Heart left ventricle (tissue), 16 donors: ENCODE measurements at regions of chr1 and their contacts with region 1.

Region 1: GRCh38 chr1:156689035-156689952 is 12.1 kb upstream of the NES start:
- DNase-seq: peak; percentile 63 to 82 (median 71)
- ATAC-seq: peak; percentile 75 to 96 (median 88)
- H3K4me3 ChIP-seq: peak overlapping the region in 5 of 12 donors; percentile 3 to 28 (median 8)
- H3K27ac ChIP-seq: no peak overlapping the region
- H3K4me1 ChIP-seq: peaks cover 0 to 19% (median 9%) of the 10 kb centered on the region in 12 donors
- H3K27me3 ChIP-seq: peaks cover 0 to 45% (median 32%) of the 10 kb centered on the region in 9 donors
- CTCF ChIP-seq: peak; percentile 86 to 96 (median 94)
- POLR2A ChIP-seq: no peak

Region 2: DNA sequence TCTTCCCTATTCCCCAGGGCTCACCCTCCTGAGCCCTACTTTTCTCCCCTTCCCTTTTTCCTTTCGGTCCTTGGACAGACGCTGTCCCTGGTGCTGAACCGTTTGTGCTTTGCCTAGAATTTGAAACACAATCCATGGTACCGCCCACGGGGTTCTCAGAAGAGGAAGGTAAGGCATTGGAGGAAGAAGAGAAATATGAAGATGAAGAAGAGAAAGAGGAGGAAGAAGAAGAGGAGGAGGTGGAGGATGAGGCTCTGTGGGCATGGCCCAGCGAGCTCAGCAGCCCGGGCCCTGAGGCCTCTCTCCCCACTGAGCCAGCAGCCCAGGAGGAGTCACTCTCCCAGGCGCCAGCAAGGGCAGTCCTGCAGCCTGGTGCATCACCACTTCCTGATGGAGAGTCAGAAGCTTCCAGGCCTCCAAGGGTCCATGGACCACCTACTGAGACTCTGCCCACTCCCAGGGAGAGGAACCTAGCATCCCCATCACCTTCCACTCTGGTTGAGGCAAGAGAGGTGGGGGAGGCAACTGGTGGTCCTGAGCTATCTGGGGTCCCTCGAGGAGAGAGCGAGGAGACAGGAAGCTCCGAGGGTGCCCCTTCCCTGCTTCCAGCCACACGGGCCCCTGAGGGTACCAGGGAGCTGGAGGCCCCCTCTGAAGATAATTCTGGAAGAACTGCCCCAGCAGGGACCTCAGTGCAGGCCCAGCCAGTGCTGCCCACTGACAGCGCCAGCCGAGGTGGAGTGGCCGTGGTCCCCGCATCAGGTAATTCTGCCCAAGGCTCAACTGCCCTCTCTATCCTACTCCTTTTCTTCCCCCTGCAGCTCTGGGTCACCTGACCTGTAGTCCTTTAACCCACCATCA is 36.9 kb before region 1 on chr1:
- intact Hi-C with region 1: loop called in 2 of 10 experiments (anchors 5 kb)
- DNase-seq: peak in 1 of 5 donors; percentile 37
- ATAC-seq: no peak
- H3K4me3 ChIP-seq: no peak overlapping the region
- H3K27ac ChIP-seq: no peak overlapping the region
- H3K4me1 ChIP-seq: peaks cover 0 to 11% (median 9%) of the 10 kb centered on the region in 12 donors
- H3K27me3 ChIP-seq: peaks cover 0 to 58% (median 5%) of the 10 kb centered on the region in 9 donors
- CTCF ChIP-seq: no peak
- POLR2A ChIP-seq: no peak

Region 3: GRCh38 chr1:156860113-156860627 is 170.9 kb after region 1 on chr1:
- intact Hi-C with region 1: loop called in 2 of 10 experiments (anchors 2 to 10 kb)
- DNase-seq: peak in 3 of 5 donors; percentile 30 to 59 (median 41)
- ATAC-seq: peak; percentile 28 to 80 (median 60)
- H3K4me3 ChIP-seq: peak overlapping the region; percentile 16 to 56 (median 40)
- H3K27ac ChIP-seq: no peak overlapping the region
- H3K4me1 ChIP-seq: peaks cover 12 to 37% (median 29%) of the 10 kb centered on the region in 12 donors
- H3K27me3 ChIP-seq: peaks cover 6 to 63% (median 34%) of the 10 kb centered on the region in 9 donors
- CTCF ChIP-seq: peak; percentile 70 to 93 (median 82)
- POLR2A ChIP-seq: no peak

Region 4: DNA sequence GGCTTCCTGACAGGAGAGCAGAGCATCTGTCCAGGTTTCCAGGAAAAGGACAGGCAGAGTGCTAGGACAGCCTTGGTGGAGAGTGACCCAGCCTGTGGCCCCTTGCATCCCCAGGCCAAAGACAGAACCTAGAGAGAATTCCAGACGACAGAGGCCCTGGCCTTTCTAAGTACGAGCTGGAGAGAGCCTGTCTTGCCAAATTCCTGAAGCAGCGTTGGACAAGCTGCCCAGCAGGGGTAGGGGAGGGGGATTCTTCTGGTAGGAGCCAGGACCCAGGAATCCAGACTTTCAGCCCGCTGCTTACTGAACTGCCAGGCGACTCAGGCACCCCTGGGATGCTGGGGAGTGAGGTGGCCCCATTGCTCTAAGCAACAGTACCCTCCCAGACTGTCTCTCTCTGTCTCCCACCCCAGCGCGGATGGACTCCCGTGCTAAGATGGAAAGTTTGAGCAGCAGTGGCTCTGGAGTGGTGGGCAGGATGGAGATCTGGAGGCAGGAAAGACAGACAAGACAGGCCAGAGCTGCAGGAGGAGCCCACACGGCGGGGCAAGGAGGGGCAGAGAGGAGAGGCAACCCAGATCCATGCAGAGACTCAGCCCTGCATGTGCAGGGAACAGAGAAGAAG is 195.4 kb after region 1 on chr1:
- intact Hi-C with region 1: loop called in 5 of 10 experiments (anchors 5 to 10 kb)
- DNase-seq: no peak
- ATAC-seq: peak in 2 of 4 donors; percentile 15 to 20
- H3K4me3 ChIP-seq: no peak overlapping the region
- H3K27ac ChIP-seq: no peak overlapping the region
- H3K4me1 ChIP-seq: peaks cover 0 to 18% (median 0%) of the 10 kb centered on the region in 12 donors
- H3K27me3 ChIP-seq: peaks cover 0 to 4% (median 0%) of the 10 kb centered on the region in 9 donors
- CTCF ChIP-seq: no peak
- POLR2A ChIP-seq: no peak

Region 5: GRCh38 chr1:156892190-156893047 is 203.1 kb after region 1 on chr1:
- intact Hi-C with region 1: loop called in 8 of 10 experiments (anchors 1 to 10 kb)
- DNase-seq: peak; percentile 94 to 96 (median 94)
- ATAC-seq: peak; percentile 80 to 90 (median 86)
- H3K4me3 ChIP-seq: peak overlapping the region in 10 of 12 donors; percentile 18 to 91 (median 72)
- H3K27ac ChIP-seq: peak overlapping the region; percentile 80 to 99 (median 93)
- H3K4me1 ChIP-seq: peaks cover 0 to 55% (median 38%) of the 10 kb centered on the region in 12 donors
- H3K27me3 ChIP-seq: peaks cover 0 to 28% (median 4%) of the 10 kb centered on the region in 9 donors
- CTCF ChIP-seq: peak; percentile 81 to 97 (median 88)
- POLR2A ChIP-seq: no peak

Region 6: DNA sequence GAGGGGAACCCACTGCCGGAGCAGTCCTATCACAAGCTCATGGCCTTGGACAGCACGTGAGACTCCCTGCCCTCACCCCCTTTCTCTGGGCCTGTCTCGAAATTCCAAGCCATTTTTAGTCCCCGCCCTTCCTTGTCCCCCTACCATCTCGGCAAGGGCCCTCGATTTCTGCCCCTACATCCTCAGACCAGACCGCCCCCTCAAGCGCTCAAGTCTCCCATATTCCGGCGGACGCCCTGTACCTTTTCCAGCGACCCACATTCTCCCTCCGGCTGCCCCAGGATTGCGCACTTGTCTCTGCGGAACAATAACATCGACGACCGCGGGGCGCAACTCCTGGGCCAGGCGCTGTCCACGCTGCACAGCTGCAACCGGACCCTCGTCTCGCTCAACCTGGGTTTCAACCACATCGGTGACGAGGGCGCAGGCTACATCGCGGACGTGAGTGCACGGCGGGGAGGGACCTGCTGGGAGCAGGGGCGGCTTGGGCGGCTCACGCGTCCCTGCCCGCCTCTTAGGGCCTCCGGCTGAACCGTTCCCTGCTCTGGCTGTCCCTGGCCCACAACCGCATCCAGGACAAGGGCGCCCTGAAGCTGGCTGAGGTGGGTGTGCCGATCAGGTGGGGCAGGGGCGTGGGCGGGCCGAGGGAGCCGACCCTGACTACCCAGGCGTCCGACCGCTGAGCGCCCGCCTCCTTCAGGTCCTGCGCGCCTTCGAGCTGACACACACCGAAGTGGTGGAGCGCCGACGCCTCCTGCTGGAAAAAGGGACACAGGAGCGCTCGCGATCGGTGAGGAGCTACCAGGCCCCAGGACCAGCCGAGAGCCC is 238.1 kb after region 1 on chr1:
- intact Hi-C with region 1: loop called in 1 of 10 experiments (anchors 5 kb)
- DNase-seq: peak; percentile 65 to 88 (median 68)
- ATAC-seq: peak; percentile 35 to 71 (median 55)
- H3K4me3 ChIP-seq: peak overlapping the region in 10 of 12 donors; percentile 27 to 41 (median 31)
- H3K27ac ChIP-seq: no peak overlapping the region
- H3K4me1 ChIP-seq: peaks cover 4 to 42% (median 19%) of the 10 kb centered on the region in 12 donors
- H3K27me3 ChIP-seq: peaks cover 24 to 69% (median 53%) of the 10 kb centered on the region in 9 donors
- CTCF ChIP-seq: peak; percentile 40 to 77 (median 64)
- POLR2A ChIP-seq: no peak